Thyroid gland (tissue), 4 donors: ENCODE measurements at regions of chr1 and their contacts with region 1.

Region 1: DNA sequence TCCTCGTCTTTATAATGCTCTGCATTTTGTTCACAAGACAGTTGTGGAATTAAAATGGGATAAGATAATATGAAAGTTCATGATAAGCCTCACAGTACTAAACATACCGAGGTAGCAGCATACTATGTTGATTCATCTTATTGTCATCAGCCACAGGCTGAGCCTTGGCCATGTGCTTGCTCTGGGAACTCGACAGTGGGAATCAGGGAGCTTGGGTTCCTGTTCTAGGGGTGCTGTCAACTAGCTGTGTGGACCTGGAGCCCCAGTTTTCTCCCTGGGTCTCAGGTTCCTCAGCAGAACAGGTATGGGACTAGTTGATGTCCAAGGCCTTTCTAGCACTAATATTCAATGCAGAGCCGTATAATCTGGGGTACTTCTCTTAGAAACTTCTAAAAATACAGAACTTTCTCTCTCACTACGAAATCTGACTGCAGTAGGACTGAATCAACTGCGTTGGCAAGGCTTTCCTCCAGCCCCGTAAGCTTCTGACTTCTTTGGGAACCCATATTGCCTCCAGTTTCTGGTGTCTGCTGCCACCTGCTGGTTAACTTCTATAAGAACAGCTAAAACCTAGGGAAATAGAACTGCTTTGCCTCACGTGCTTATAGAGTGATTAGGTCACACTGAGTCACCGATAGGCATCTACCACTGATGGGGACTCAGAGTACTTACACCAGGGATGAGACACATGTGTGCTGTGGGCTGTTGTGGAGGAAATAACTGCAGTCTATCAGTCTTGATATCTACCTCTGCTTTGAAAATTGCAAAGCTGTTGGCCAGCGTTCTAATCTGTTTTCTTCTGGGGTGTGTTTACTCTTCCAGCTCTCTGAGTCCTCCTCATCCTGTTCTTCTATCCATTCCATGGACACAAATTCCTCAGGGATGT is 110.9 kb downstream of the RGL1 start:
- DNase-seq: peak; percentile 49 to 72
- H3K4me3 ChIP-seq: no peak overlapping the region
- H3K27ac ChIP-seq: peak overlapping the region in 1 of 3 donors; percentile 5
- H3K4me1 ChIP-seq: no peaks in the 10 kb centered on the region
- H3K27me3 ChIP-seq: no peaks in the 10 kb centered on the region
- CTCF ChIP-seq: peak; percentile 58 to 88 (median 78)
- POLR2A ChIP-seq: no peak

Region 2: DNA sequence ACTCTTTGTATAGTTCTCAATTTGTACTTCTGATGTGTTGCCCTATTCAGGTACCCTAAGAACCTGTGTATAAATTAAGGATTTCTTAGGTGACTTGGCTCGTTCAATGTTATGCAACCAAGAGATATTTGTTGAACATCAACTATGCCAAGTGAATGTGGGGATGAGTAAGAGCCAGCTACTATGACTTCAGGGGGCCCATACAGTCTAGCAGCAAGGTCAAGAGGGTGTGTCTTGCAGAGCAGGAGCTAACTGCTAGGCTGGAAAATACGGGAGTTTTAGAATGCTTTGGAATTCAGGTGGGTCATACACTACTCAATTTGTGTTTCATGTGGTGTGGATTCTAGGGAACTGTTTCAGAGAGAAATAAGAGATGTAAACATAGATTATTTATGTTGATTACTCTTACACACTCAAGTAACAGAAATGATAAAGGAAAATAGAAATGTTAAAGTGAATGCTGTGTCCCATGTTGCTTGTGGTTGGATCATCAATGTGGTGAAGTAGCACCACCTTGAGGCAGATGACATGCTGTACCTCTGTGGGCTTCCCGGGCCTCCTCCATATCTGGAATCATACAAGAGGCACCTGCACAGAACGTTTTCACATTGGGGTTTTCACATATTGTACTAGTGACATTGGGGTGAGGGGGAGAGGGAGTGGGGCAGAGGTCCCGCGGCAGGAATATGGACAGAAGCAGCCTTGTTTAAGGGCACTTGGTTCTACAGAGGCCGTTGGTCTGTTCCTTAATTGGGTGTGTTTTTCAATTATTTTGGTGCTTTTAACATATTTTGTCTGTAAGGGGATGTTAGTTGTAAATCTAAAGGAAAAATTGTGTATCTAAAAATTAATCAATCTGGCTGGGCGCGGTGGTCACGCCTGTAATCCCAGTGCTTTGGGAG is 292.7 kb before region 1 on chr1:
- intact Hi-C with region 1: no loop called
- DNase-seq: peak; percentile 57 to 60
- H3K4me3 ChIP-seq: no peak overlapping the region
- H3K27ac ChIP-seq: no peak overlapping the region
- H3K4me1 ChIP-seq: peaks cover 10 to 20% of the 10 kb centered on the region in 2 donors
- H3K27me3 ChIP-seq: no peaks in the 10 kb centered on the region
- CTCF ChIP-seq: peak in 5 of 6 experiments; percentile 3 to 65 (median 56)
- POLR2A ChIP-seq: no peak

Region 3: DNA sequence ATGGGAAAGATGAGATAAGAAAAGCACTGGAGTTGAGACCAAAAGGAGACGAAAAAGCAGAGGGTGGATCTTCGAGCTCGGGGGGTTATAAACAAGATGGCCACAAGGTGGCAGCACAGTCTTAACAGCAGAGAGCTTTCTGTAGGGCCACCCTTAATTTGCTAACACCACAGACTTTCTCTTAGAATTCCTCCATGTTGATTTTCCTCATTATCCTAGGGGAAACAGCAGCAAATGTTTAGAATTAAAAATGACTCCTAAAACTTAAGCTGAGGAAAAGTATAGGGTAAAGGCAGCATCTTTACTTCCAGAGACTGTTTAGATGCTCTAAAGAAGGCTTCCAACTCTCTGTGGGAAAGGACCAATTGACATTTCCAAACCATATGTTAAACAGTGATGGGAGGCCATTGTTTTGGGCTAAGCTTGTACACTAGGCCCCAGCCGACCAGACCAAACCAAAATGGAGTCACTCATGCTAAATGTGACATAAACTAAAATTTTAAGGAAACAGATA is 260.2 kb before region 1 on chr1:
- intact Hi-C with region 1: loop called (anchors 5 kb)
- DNase-seq: peak; percentile 78 to 83
- H3K4me3 ChIP-seq: no peak overlapping the region
- H3K27ac ChIP-seq: no peak overlapping the region
- H3K4me1 ChIP-seq: no peaks in the 10 kb centered on the region
- H3K27me3 ChIP-seq: no peaks in the 10 kb centered on the region
- CTCF ChIP-seq: peak; percentile 63 to 91 (median 86)
- POLR2A ChIP-seq: no peak

Region 4: DNA sequence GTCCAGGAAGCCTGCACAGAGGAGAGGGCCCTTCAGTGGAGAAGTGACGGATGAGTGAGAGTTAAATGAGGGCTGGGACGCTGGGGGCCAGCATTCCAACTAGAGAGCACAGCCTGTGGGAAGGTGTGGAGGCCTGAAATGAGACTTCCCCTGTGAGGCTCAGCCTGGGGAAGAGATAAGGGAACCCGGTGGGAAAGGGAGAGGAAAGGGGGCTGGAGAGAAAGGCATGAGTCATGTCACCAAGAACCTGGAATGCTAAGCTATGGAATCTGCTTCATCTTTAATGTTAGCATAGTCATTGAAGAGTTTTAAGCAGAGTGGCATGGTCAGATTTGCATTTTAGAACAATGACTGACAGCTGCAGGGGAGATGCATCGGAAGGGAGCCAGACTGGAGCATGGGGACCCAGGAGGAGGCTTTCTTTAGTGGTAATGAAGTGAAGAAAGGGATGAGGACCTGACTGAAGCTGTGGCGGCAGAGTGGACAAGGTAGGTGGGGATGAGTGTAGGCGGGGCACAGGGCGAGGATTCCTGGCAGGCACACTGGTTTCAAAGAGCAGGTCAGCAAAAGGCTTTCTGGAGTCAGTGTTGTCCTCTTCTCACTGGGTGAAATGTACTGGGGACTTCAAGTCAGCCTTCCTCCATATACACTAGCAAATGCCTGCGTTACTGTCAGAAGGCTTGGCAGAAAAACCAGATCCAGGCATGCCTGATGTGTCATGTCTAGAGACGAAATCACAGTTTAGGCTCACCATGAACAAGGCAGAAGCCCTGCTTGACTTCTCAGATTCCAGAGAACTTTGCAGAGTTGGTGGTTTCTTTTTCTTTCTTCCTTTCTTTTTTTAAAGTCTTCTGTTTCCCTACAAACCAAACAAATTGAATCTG is 102.9 kb before region 1 on chr1:
- intact Hi-C with region 1: no loop called
- DNase-seq: no peak
- H3K4me3 ChIP-seq: no peak overlapping the region
- H3K27ac ChIP-seq: no peak overlapping the region
- H3K4me1 ChIP-seq: peaks cover 0 to 6% of the 10 kb centered on the region in 2 donors
- H3K27me3 ChIP-seq: no peaks in the 10 kb centered on the region
- CTCF ChIP-seq: no peak
- POLR2A ChIP-seq: no peak

Region 5: DNA sequence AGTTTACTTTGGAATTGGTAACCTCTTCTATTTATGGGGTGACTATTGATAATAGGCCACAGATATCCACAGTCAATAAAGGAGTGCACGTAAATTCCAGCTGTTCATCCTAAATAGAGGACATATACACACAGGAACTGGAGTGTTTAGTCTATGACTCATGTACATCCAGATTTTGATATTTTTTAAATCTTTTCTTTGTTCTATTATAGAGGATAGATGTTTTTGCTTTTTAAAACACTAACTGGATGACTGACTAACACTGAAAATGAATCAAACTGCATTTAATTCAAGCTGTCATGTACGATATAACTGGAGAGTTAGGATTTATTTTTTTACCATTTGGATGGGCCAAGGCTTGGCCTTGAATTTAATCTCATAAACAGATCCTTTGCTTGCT is 65.0 kb before region 1 on chr1:
- intact Hi-C with region 1: no loop called
- DNase-seq: no peak
- H3K4me3 ChIP-seq: no peak overlapping the region
- H3K27ac ChIP-seq: no peak overlapping the region
- H3K4me1 ChIP-seq: no peaks in the 10 kb centered on the region
- H3K27me3 ChIP-seq: no peaks in the 10 kb centered on the region
- CTCF ChIP-seq: no peak
- POLR2A ChIP-seq: no peak

Region 6: GRCh38 chr1:184176058-184176457 is 260.2 kb after region 1 on chr1:
- intact Hi-C with region 1: no loop called
- DNase-seq: no peak
- H3K4me3 ChIP-seq: no peak overlapping the region
- H3K27ac ChIP-seq: no peak overlapping the region
- H3K4me1 ChIP-seq: no peaks in the 10 kb centered on the region
- H3K27me3 ChIP-seq: no peaks in the 10 kb centered on the region
- CTCF ChIP-seq: no peak
- POLR2A ChIP-seq: no peak